Dorsolateral prefrontal cortex (tissue), 120 donors: ENCODE measurements at regions of chr18 and their contacts with region 1.

Region 1: GRCh38 chr18:3869848-3870247 is 419.9 kb downstream of the TGIF1 start:
- DNase-seq: no peak
- H3K4me3 ChIP-seq: peak overlapping the region in 27 of 59 donors; percentile 8 to 70 (median 52)
- H3K27ac ChIP-seq: peak overlapping the region in 25 of 59 donors; percentile 5 to 89 (median 71)
- H3K27me3 ChIP-seq: peaks cover 0 to 6% (median 0%) of the 10 kb centered on the region in 45 donors
- CTCF ChIP-seq: peak in 55 of 56 donors; percentile 27 to 75 (median 54)

Region 2: DNA sequence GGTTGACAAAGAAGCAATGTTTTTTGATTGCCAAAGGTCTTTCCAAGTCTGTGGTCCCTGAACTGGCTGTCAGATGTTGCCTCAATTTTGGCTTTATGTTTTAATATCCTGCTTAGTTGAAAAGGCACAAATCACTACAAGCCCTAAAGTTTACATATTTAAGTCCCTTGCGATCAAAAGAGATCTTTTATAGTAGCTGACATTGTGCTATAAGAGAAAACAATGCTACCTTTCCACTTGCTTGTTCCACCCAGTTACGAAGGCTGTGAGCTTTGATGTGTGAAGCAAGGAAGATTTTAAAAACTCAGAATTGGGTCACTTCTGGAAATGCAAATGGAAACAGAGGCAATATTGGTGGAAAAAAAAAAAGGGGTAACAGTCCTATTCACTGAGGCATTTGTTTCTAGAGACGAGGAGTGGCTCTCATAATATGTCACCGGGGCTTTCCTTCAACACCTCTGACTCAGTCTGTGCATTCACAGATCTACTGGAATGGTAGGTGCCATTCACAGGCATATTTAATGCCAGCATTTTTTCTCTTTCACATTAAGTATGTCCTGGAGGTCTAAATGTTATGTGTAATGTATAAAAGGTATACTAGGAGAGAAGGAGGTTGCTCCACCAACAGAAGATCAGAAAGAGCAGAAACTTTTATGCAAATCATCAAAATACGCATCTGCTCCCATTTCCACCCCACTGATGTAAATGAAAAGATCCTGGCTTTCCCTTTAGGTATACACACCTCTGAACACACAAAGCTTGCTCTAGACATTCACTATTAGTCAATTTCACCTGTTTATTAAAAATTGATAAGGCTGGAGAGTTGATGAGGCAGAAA is 328.1 kb before region 1 on chr18:
- intact Hi-C with region 1: no loop called
- DNase-seq: no peak
- H3K4me3 ChIP-seq: no peak overlapping the region
- H3K27ac ChIP-seq: no peak overlapping the region
- H3K27me3 ChIP-seq: peaks cover 0 to 6% (median 0%) of the 10 kb centered on the region in 45 donors
- CTCF ChIP-seq: no peak

Region 3: DNA sequence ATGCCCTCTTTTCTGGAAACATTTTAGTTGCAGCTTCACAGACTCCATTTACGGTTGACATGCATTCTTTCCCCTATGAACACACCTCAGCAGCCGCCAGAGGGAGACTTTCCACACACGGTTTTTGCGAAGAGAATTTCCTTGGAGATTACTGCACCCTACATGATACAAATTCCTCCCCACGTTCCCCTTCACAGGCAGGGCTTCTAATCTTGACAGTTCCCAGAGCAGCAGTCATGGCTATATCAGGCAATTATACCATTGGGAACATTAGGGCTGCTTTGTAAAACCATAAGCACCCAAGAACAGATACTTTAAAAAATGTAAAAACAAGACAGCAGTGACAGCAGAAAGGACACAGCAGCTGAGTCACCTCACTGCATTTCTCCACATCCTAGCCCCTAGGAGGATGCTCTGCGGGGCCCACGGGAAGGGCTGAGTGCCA is 166.1 kb before region 1 on chr18:
- intact Hi-C with region 1: loop called (anchors 2 to 10 kb)
- DNase-seq: peak; percentile 28 to 82 (median 72)
- H3K4me3 ChIP-seq: peak overlapping the region in 4 of 59 donors; percentile 14 to 30 (median 17)
- H3K27ac ChIP-seq: peak overlapping the region in 57 of 59 donors; percentile 3 to 89 (median 68)
- H3K27me3 ChIP-seq: no peaks in the 10 kb centered on the region
- CTCF ChIP-seq: peak; percentile 25 to 82 (median 68)

Region 4: DNA sequence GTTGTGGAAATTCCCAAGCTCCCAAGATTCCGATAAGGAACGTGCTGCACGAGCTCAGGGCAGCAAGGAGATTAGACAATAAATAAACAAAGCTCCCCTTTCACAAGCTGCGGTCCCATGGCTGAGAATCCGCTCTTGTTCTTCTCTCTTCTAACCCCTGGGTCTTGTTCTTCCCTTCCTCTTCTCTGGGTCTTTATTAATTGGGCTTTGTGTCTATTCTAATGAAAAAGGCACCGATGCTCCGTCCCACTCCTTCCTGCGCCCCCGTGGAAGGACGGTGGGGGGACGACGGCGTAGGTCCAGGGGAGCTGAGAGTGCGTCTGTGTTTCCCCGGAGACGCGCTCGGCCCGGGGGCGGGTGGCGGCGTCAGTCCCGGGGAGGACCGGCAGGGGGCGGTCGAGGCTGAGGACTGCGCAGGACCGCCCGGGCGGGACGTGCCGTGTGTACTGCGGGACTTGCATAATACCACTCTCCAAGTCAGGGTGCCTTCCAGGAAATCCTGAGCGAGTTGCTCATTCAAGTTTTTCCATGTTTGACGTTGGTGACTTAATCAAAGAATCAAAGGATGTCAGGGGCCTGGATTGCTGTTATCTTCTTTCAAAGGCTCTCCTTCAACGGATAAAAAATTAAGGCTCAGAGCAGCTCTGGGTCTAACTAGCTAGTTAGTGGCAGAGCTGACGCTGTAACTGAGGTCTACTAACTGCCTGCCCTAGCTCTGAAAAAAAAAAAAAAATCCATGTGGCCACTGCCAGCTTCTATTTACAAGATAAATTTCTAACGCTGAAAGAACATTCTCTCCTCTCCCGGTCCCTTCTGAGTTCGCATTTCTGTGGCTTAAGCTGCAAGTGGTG is 98.5 kb before region 1 on chr18:
- intact Hi-C with region 1: loop called (anchors 2 to 10 kb)
- DNase-seq: peak; percentile 76 to 94 (median 84)
- H3K4me3 ChIP-seq: peak overlapping the region; percentile 15 to 71 (median 51)
- H3K27ac ChIP-seq: peak overlapping the region in 58 of 59 donors; percentile 23 to 89 (median 71)
- H3K27me3 ChIP-seq: no peaks in the 10 kb centered on the region
- CTCF ChIP-seq: peak; percentile 81 to 99 (median 96)

Region 5: DNA sequence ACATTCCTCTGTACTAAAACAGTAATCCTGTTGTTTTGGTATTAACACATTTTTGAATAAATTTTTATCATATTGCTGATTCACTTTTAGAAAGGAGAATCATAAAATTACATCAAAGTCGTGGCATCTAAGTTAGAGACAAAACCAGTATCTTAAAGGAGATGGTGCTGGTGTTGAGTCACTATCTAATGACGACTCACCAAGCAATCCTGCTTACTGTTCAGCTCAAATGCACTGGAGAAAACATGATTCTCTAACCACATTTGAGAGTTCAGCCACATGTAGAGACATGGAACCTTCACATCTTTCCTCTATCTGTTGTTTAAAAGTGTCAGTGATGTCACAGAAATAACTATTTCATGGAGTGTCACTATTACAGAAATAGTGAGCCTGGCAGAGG is 53.9 kb after region 1 on chr18:
- intact Hi-C with region 1: loop called in 1 of 2 experiments (anchors 10 kb)
- DNase-seq: no peak
- H3K4me3 ChIP-seq: no peak overlapping the region
- H3K27ac ChIP-seq: no peak overlapping the region
- H3K27me3 ChIP-seq: no peaks in the 10 kb centered on the region
- CTCF ChIP-seq: no peak